Activated T-helper 1 cell treated with anti-CD3 and anti-CD28 coated beads, Interleukin-12 subunit alpha, Interleukin-12 subunit beta, Interleukin-2, Interleukin-4 antibody, amounts not matched to agents 30 ng/mL and 10 ng/mL and 1 ng/mL, durations not matched to agents 14 hours and 24 hours and 36 hours (primary cell): ENCODE measurements at regions of chr10 and their contacts with region 1.

Region 1: GRCh38 chr10:119207367-119207668 is at the start of gene GRK5:
- DNase-seq: peak; percentile 98
- H3K4me3 Mint-ChIP-seq: peak within 1 kb of the TSS; percentile 99
- H3K27ac Mint-ChIP-seq: peak within 1 kb of the TSS; percentile 99
- H3K4me1 Mint-ChIP-seq: peaks cover 49% of the 10 kb centered on the region
- H3K27me3 Mint-ChIP-seq: no peaks in the 10 kb centered on the region
- total RNA-seq, gene GRK5: 25.3 and 25.8 TPM in 2 replicates

Region 2: GRCh38 chr10:119131512-119132240 is 75.6 kb before region 1 on chr10:
- intact Hi-C with region 1: loop called (anchors 2 kb)
- DNase-seq: peak; percentile 65
- H3K4me3 Mint-ChIP-seq: peak overlapping the region; percentile 80
- H3K27ac Mint-ChIP-seq: peak overlapping the region; percentile 92
- H3K4me1 Mint-ChIP-seq: peaks cover 66% of the 10 kb centered on the region
- H3K27me3 Mint-ChIP-seq: no peaks in the 10 kb centered on the region

Region 3: GRCh38 chr10:119221201-119221600 is 13.9 kb after region 1 on chr10:
- intact Hi-C with region 1: loop called (anchors 1 kb)
- DNase-seq: no peak
- H3K4me3 Mint-ChIP-seq: no peak overlapping the region
- H3K27ac Mint-ChIP-seq: no peak overlapping the region
- H3K4me1 Mint-ChIP-seq: peaks cover 24% of the 10 kb centered on the region
- H3K27me3 Mint-ChIP-seq: no peaks in the 10 kb centered on the region

Region 4: GRCh38 chr10:119281581-119282071 is 74.3 kb after region 1 on chr10:
- intact Hi-C with region 1: loop called (anchors 1 kb)
- DNase-seq: no peak
- H3K4me3 Mint-ChIP-seq: no peak overlapping the region
- H3K27ac Mint-ChIP-seq: no peak overlapping the region
- H3K4me1 Mint-ChIP-seq: peaks cover 49% of the 10 kb centered on the region
- H3K27me3 Mint-ChIP-seq: no peaks in the 10 kb centered on the region

Region 5: DNA sequence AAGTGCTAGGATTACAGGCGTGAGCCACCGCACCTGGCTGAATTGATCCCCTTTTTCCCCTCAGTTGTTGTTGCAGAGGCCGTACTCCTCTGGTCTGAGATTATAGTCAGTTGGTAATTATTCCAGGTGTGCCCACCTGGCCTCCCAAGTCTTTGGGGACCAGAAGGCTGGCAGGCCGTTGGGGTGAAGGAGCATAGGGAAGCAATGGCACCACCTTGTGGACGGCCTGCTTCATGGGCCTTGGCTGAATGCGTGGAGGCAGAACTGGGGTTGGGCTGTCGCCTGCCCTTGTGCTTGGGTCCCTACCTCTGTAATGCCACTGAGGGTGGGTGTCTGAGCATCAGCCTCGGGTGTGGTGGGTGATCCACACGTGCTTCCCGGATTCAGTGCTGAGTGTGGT is 209.5 kb after region 1 on chr10:
- intact Hi-C with region 1: loop called (anchors 1 kb)
- DNase-seq: peak; percentile 51
- H3K4me3 Mint-ChIP-seq: no peak overlapping the region
- H3K27ac Mint-ChIP-seq: no peak overlapping the region
- H3K4me1 Mint-ChIP-seq: no peaks in the 10 kb centered on the region
- H3K27me3 Mint-ChIP-seq: no peaks in the 10 kb centered on the region

Region 6: GRCh38 chr10:119542988-119543813 is 335.9 kb after region 1 on chr10:
- intact Hi-C with region 1: loop called (anchors 1 kb)
- DNase-seq: peak; percentile 50
- H3K4me3 Mint-ChIP-seq: peak overlapping the region; percentile 84
- H3K27ac Mint-ChIP-seq: peak overlapping the region; percentile 91
- H3K4me1 Mint-ChIP-seq: peaks cover 40% of the 10 kb centered on the region
- H3K27me3 Mint-ChIP-seq: peaks cover 15% of the 10 kb centered on the region

Region 7: DNA sequence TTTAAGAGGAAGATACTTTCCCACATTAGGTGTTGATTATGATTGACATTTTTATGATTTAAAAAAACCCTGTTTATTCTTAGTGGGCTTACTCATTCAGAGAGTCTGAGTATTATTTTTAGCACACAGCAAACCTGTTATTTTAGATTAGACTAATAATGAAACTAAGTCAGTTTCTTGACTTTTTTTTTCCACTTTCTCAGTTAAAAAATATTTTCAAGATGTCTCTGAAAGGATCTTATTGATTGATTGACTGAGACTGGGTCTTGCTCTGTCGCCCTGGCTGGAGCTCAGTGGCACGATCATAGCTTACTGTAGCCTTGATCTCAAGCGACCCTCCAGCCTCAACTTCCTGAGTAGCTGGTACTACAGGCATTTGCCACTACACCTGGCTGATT is 498.1 kb after region 1 on chr10:
- intact Hi-C with region 1: loop called (anchors 10 kb)
- DNase-seq: no peak
- H3K4me3 Mint-ChIP-seq: peak overlapping the region; percentile 74
- H3K27ac Mint-ChIP-seq: peak overlapping the region; percentile 99
- H3K4me1 Mint-ChIP-seq: peaks cover 82% of the 10 kb centered on the region
- H3K27me3 Mint-ChIP-seq: peaks cover 2% of the 10 kb centered on the region